ENCODE measurements at regions of chr17 and their contacts with region 1.

Region 1: DNA sequence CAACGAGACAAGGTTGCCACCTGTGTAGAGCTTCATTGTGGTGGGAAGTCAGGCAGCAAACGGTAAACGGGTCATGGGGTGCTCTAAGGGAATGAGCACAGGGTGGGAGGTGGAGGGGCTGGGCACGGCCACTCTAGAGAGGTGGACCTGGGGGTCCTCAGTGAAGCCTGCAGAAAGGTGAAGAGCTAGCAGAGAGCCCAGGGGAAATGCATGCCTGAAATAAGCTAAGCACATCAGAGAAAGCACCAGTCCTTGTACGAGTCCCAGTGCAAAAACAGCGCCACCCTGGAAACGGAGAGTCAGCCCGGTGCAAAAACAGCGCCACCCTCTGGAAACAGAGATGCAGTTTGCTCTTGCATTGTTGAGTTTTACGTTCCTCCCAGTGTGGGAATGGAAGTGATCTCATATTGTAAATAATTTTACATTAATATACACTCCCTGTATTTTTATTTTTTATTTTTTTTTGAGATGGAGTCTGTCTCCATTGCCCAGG is 65.0 kb downstream of the TBC1D16 start:
- DNase-seq: peak in 1 of 3 donors; percentile 7
- ATAC-seq: peak in 1 of 2 donors; percentile 22
- H3K4me3 ChIP-seq: no peak overlapping the region
- H3K27ac ChIP-seq: no peak overlapping the region
- H3K4me1 ChIP-seq: no peaks in the 10 kb centered on the region
- H3K27me3 ChIP-seq: no peaks in the 10 kb centered on the region

Region 2: DNA sequence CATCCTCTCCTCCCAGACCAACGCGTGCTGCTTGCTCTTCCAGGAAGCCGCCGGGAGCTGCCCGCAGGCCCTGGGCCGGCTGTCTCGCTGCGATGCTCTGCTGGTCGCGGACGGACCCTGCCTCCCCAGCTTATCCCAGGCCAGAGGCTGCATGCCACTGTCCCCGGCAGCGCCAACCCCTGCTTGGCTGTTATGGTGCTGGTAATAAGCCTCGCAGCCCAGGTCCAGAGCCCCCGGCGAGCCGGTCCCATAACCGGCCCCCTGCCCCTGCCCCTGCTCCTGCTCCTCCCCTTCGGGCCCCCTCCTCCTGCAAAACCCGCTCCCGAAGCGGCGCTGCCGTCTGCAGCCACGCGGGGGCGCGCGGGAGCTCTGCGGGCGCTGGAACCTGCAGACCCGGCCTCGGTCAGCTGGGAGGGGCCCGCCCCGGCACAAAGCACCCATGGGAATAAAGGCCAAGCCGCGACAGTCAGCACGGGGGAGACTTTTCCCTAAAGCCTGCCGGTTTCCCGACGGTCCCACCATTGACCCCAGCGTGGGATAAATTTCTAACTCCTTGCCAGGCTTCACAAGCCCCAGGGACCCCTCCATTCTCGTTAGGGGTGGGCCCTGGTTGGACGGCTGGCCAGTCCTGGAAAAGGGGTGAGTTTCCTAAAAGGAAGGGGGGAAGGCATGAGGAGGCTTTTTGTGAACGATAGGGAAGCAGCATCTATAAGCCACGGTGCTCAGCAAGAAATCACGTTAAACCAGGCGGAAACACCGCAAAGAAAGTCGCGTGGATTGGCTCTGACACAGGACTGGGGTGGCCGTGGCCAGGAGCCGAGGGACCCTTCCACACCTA is 228.7 kb before region 1 on chr17:
- intact Hi-C with region 1: loop called in 1 of 4 experiments (anchors 10 kb)
- DNase-seq: peak; percentile 67 to 91 (median 90)
- ATAC-seq: peak; percentile 55 to 70
- H3K4me3 ChIP-seq: no peak overlapping the region
- H3K27ac ChIP-seq: no peak overlapping the region
- H3K4me1 ChIP-seq: no peaks in the 10 kb centered on the region
- H3K27me3 ChIP-seq: no peaks in the 10 kb centered on the region

Region 3: GRCh38 chr17:80045703-80046102 is 75.1 kb after region 1 on chr17:
- intact Hi-C with region 1: no loop called
- DNase-seq: no peak
- ATAC-seq: no peak
- H3K4me3 ChIP-seq: no peak overlapping the region
- H3K27ac ChIP-seq: no peak overlapping the region
- H3K4me1 ChIP-seq: no peaks in the 10 kb centered on the region
- H3K27me3 ChIP-seq: no peaks in the 10 kb centered on the region

Measured in right cardiac atrium (tissue), 5 donors.